Tibial artery (tissue), 4 donors: ENCODE measurements at regions of chr16 and their contacts with region 1.

Region 1: DNA sequence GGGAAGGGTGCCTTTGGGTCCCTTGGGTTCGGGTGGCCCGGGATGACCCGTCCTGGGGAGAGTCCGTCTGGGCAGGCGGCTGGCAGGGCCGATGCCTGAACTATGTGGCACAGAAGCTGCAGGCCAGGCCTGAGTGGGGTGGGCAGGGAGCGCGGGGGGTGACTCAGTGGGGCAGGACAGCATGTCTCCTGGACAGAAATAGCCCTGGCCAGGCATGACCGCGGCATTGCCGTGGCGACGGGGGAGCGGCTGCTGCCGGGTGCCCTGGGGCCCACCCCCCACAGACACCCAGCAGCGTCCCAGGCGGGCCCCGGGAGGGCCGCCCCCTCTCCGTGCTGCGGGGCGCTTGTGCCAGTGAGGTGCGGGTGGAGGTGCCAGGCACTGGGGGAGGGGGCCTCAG is 1.8 kb upstream of the C1QTNF8 start:
- DNase-seq: peak; percentile 87 to 98
- H3K4me3 ChIP-seq: peak overlapping the region in 1 of 2 donors; percentile 16
- H3K27ac ChIP-seq: peak overlapping the region; percentile 96 to 97
- H3K4me1 ChIP-seq: peaks cover 7 to 77% (median 53%) of the 10 kb centered on the region in 4 donors
- H3K27me3 ChIP-seq: peaks cover 0 to 7% of the 10 kb centered on the region in 2 donors
- CTCF ChIP-seq: no peak

Region 2: GRCh38 chr16:667780-668518 is 429.9 kb before region 1 on chr16 and contains the start of gene RHOT2:
- intact Hi-C with region 1: no loop called
- DNase-seq: peak; percentile 91 to 96
- H3K4me3 ChIP-seq: peak within 1 kb of the TSS; percentile 84 to 92
- H3K27ac ChIP-seq: peak within 1 kb of the TSS; percentile 87
- H3K4me1 ChIP-seq: peaks cover 8 to 22% (median 18%) of the 10 kb centered on the region in 4 donors
- H3K27me3 ChIP-seq: no peaks in the 10 kb centered on the region
- CTCF ChIP-seq: peak; percentile 88 to 90

Region 3: GRCh38 chr16:1082266-1082951 is 15.4 kb before region 1 on chr16:
- intact Hi-C with region 1: no loop called
- DNase-seq: no peak
- H3K4me3 ChIP-seq: no peak overlapping the region
- H3K27ac ChIP-seq: peak overlapping the region in 1 of 2 donors; percentile 9
- H3K4me1 ChIP-seq: peaks cover 0 to 57% (median 47%) of the 10 kb centered on the region in 4 donors
- H3K27me3 ChIP-seq: peaks cover 4 to 71% of the 10 kb centered on the region in 2 donors
- CTCF ChIP-seq: no peak

Region 4: GRCh38 chr16:1159973-1160772 is 62.4 kb after region 1 on chr16:
- intact Hi-C with region 1: loop called (anchors 2 kb)
- DNase-seq: peak; percentile 51 to 94
- H3K4me3 ChIP-seq: peak overlapping the region; percentile 12 to 28
- H3K27ac ChIP-seq: peak overlapping the region; percentile 66 to 94
- H3K4me1 ChIP-seq: peaks cover 0 to 93% (median 68%) of the 10 kb centered on the region in 4 donors
- H3K27me3 ChIP-seq: peaks cover 0 to 19% of the 10 kb centered on the region in 2 donors
- CTCF ChIP-seq: no peak

Region 5: GRCh38 chr16:1245432-1246020 is 147.7 kb after region 1 on chr16:
- intact Hi-C with region 1: no loop called
- DNase-seq: no peak
- H3K4me3 ChIP-seq: no peak overlapping the region
- H3K27ac ChIP-seq: no peak overlapping the region
- H3K4me1 ChIP-seq: no peaks in the 10 kb centered on the region
- H3K27me3 ChIP-seq: peaks cover 0 to 30% of the 10 kb centered on the region in 2 donors
- CTCF ChIP-seq: no peak

Region 6: GRCh38 chr16:1288611-1289474 is 191.0 kb after region 1 on chr16:
- intact Hi-C with region 1: no loop called
- DNase-seq: no peak
- H3K4me3 ChIP-seq: no peak overlapping the region
- H3K27ac ChIP-seq: no peak overlapping the region
- H3K4me1 ChIP-seq: peaks cover 0 to 15% (median 0%) of the 10 kb centered on the region in 4 donors
- H3K27me3 ChIP-seq: peaks cover 0 to 92% of the 10 kb centered on the region in 2 donors
- CTCF ChIP-seq: no peak